ENCODE measurements at regions of chr9 and their contacts with region 1.

Region 1: DNA sequence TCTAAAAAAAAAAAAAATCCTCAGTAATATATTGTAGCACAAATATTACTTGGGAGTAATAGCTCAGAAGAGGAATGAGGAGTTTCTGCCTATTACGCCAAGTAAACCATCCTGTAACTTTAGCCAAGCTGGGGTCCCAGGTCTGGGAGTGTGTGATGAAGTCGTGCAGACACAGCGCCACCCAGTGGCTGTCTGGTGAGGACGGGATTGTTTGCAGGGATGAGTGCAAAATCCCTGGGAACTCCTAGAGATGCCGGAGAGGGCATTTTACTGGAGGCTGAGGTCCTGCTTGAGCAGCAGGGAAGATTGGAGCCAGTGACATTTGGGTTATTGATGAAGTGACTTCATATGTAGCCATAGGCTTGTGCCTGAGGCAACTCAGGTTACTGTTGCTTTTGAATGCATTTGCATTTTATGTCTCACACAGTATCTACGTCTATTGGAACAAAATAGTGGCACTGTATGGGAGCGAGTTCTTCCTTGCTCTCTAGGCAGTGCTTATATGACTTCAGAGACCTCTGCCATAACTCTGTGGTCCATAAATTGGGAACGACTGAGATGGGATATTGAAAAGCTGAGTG is 72.8 kb downstream of the PSAT1 start:
- DNase-seq: peak; percentile 13 to 67 (median 33)
- ATAC-seq: no peak
- H3K4me3 ChIP-seq: no peak overlapping the region
- H3K4me3 Mint-ChIP-seq: no peak overlapping the region
- H3K27ac ChIP-seq: no peak overlapping the region
- H3K27ac Mint-ChIP-seq: no peak overlapping the region
- H3K4me1 ChIP-seq: no peaks in the 10 kb centered on the region
- H3K4me1 Mint-ChIP-seq: no peaks in the 10 kb centered on the region
- H3K27me3 ChIP-seq: peaks cover 0 to 3% of the 10 kb centered on the region in 2 experiments
- H3K27me3 Mint-ChIP-seq: peaks cover 45% of the 10 kb centered on the region
- CTCF ChIP-seq: peak; percentile 75

Region 2: DNA sequence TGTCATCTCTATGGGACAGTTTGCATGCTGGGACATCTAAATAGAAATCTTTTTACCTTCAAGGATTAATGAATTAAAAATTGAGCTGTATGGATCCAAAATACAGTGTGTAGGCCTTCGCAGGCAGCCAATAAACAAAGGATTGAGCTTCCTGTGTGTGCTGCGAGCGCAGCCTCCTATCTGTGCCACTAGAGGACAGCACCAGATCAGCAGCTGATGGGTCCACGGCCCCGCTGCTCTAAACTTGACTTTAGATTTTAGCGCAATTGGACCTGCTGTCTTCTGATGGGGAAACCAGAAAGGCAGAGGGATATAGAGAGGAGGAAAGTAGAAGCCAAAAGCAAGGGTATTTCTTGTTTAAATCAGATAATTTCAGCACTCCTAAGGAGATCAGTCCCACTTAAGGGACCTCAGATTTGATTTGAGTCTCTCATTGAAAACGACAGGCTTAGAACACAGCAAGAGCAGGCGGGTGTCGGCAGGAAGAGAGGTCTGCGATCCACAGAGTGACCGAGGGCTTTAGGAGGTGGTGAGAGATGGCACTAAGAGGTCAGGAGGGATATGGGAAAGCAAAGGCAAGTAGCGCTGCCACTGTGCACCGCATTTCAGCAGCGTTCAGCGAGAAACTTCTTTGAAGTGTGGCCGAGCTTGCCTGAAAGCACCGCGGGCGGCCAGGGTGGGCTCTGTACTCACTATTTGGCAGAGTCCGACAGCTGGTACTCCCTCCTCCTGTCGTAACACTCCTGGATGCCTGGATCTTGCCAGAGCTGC is 935.9 kb before region 1 on chr9:
- CTCF ChIA-PET with region 1: interaction called, 6 read pairs
- POLR2A ChIA-PET with region 1: no interaction called
- intact Hi-C with region 1: loop called in 1 of 2 experiments (anchors 5 kb)
- DNase-seq: peak; percentile 14 to 71 (median 38)
- ATAC-seq: peak; percentile 91
- H3K4me3 ChIP-seq: no peak overlapping the region
- H3K4me3 Mint-ChIP-seq: no peak overlapping the region
- H3K27ac ChIP-seq: no peak overlapping the region
- H3K27ac Mint-ChIP-seq: no peak overlapping the region
- H3K4me1 ChIP-seq: peaks cover 5% of the 10 kb centered on the region
- H3K4me1 Mint-ChIP-seq: peaks cover 5% of the 10 kb centered on the region
- H3K27me3 ChIP-seq: no peaks in the 10 kb centered on the region
- H3K27me3 Mint-ChIP-seq: peaks cover 5% of the 10 kb centered on the region
- CTCF ChIP-seq: peak; percentile 92

Region 3: DNA sequence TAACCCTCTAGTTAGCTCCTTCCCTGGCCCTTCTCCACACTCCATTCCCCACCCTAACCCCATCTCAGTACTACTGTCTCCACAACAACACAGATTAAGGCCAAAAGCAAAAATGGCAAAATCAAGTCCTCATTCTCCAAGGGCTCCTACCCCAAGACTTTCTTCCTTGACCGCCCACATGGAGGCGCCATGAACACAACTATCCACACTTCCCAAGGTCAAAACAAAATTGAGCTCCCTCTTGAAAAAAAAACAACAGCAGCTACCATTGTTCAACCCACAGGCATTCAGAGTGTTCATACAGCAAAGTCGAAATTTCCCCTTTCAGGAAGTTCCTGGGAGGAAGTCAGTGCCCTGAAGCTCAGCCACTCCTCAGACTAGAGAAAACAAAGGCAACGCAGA is 392.5 kb before region 1 on chr9:
- CTCF ChIA-PET with region 1: interaction called, 3 read pairs
- POLR2A ChIA-PET with region 1: no interaction called
- intact Hi-C with region 1: loop called in 1 of 2 experiments (anchors 10 kb)
- DNase-seq: peak; percentile 9 to 79 (median 43)
- ATAC-seq: peak; percentile 65
- H3K4me3 ChIP-seq: no peak overlapping the region
- H3K4me3 Mint-ChIP-seq: peak overlapping the region; percentile 54
- H3K27ac ChIP-seq: no peak overlapping the region
- H3K27ac Mint-ChIP-seq: peak overlapping the region; percentile 40
- H3K4me1 ChIP-seq: peaks cover 37% of the 10 kb centered on the region
- H3K4me1 Mint-ChIP-seq: peaks cover 69% of the 10 kb centered on the region
- H3K27me3 ChIP-seq: no peaks in the 10 kb centered on the region
- H3K27me3 Mint-ChIP-seq: no peaks in the 10 kb centered on the region
- CTCF ChIP-seq: peak; percentile 44

Region 4: GRCh38 chr9:78261403-78262001 is 108.2 kb before region 1 on chr9:
- CTCF ChIA-PET with region 1: interaction called, 5 read pairs
- POLR2A ChIA-PET with region 1: no interaction called
- intact Hi-C with region 1: loop called (anchors 1 to 2 kb)
- DNase-seq: peak in 3 of 14 experiments; percentile 38 to 44 (median 42)
- ATAC-seq: peak; percentile 48
- H3K4me3 ChIP-seq: no peak overlapping the region
- H3K4me3 Mint-ChIP-seq: no peak overlapping the region
- H3K27ac ChIP-seq: no peak overlapping the region
- H3K27ac Mint-ChIP-seq: no peak overlapping the region
- H3K4me1 ChIP-seq: no peaks in the 10 kb centered on the region
- H3K4me1 Mint-ChIP-seq: no peaks in the 10 kb centered on the region
- H3K27me3 ChIP-seq: no peaks in the 10 kb centered on the region
- H3K27me3 Mint-ChIP-seq: no peaks in the 10 kb centered on the region
- CTCF ChIP-seq: peak; percentile 87

Region 5: DNA sequence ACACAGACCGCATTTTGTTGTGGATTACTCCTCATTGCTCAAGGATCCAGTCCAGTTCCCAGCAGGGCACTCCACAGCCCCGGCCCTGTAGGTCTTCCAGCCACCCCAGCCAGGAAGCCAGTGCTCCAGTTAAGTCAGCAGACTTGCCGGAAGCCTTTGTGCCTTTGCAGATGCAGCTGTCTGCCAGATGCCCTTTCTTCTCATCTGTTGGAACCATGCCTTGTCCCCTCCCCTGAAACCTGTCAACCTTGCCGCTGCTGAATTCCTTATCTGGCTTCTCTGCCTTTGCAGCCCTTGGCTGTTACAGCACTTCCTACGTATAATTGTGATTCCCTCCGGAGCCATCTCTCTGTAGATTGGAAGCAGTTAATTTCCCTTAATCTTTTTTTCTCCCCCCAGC is 44.4 kb before region 1 on chr9:
- CTCF ChIA-PET with region 1: no interaction called
- POLR2A ChIA-PET with region 1: no interaction called
- intact Hi-C with region 1: no loop called
- DNase-seq: no peak
- ATAC-seq: no peak
- H3K4me3 ChIP-seq: no peak overlapping the region
- H3K4me3 Mint-ChIP-seq: no peak overlapping the region
- H3K27ac ChIP-seq: no peak overlapping the region
- H3K27ac Mint-ChIP-seq: no peak overlapping the region
- H3K4me1 ChIP-seq: peaks cover 2% of the 10 kb centered on the region
- H3K4me1 Mint-ChIP-seq: peaks cover 5% of the 10 kb centered on the region
- H3K27me3 ChIP-seq: no peaks in the 10 kb centered on the region
- H3K27me3 Mint-ChIP-seq: no peaks in the 10 kb centered on the region
- CTCF ChIP-seq: no peak